Activated CD8-positive, alpha-beta T cell treated with anti-CD3 and anti-CD28 coated beads for 36 hours (primary cell): ENCODE measurements at regions of chr10 and their contacts with region 1.

Region 1: GRCh38 chr10:70212879-70213278 is 20.4 kb downstream of the PPA1 start:
- DNase-seq: no peak
- ATAC-seq: no peak
- H3K4me3 Mint-ChIP-seq: no peak overlapping the region
- H3K27ac Mint-ChIP-seq: no peak overlapping the region
- H3K4me1 Mint-ChIP-seq: no peaks in the 10 kb centered on the region
- H3K27me3 Mint-ChIP-seq: no peaks in the 10 kb centered on the region
- CTCF ChIP-seq: no peak

Region 2: DNA sequence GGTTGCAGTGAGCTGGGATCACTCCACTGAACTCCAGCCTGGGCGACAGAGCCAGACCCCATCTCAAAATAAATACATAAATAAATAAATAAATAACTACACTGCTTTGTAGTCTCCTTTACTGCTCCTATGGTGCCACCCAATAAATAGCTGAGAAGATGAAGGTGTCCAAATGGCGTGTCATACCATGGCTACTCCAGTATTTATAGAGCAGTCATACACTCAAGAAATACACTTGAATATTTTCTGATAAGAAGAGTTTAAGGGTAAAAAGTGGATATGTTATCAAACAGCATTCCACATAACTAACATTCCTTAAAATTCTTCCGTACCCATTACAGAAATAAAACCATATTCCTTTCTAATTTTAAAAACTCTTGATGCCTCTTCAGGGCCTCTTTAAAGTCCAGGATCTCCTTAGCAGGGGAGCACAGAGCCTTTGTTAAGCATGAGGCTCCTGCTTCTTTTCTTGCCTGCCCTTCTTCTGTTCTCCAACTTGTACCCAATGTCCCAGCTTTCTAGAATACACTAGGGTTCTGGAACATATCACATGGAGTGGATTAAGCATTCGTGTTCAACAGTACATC is 34.6 kb before region 1 on chr10:
- CTCF ChIA-PET with region 1: no interaction called
- POLR2A ChIA-PET with region 1: no interaction called
- intact Hi-C with region 1: loop called (anchors 2 kb)
- DNase-seq: no peak
- ATAC-seq: no peak
- H3K4me3 Mint-ChIP-seq: no peak overlapping the region
- H3K27ac Mint-ChIP-seq: no peak overlapping the region
- H3K4me1 Mint-ChIP-seq: peaks cover 11% of the 10 kb centered on the region
- H3K27me3 Mint-ChIP-seq: peaks cover 2% of the 10 kb centered on the region
- CTCF ChIP-seq: no peak